ENCODE measurements at regions of chr3 and their contacts with region 1.

Region 1: DNA sequence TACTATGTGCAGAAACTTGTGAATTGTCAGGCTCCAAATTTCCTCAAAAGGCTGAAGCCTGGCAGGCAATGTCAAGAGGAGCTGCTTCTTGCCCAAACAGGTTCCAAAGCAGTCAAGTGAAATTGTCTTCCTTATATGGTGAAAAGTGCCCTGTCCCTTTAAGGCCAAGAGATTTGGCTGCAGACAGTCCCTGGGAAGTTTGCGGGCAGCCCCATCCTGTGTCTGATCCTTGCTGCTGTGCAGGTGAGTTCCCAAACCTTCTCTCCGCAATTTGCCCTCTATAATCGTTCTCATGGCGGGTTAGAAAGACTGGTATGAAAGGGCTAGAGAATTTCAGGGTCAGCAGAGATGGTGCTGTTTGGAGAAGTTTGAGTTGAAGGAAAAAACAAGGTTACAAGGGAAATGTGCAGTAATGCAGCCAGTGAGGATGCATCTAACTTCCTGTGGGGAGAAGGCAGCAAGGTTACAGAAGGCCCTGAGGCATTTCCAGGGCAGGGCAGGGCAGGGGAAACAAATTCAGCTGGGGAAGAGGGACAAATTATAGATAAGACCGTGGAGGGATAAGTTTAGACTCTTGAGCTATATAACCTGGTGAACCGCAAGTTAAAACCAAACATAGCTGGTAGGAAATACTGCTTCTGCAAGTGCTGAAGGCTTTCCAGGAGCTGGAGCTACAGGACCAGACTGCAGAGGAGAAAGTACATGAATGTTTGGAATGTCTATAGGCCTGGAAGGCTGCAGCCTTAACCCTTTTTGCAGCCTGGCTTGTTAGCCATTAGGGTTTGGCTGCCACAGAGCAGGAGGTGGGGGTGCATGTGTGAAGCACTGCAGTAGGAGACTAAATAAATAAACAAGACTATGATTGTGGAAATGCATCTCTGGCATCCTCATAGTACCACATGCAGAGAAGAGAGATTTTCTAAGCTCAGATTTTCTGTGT is 256.2 kb upstream of the IL12A start:
- DNase-seq: no peak
- H3K4me3 ChIP-seq: peak overlapping the region in 16 of 59 donors; percentile 2 to 33 (median 27)
- H3K27ac ChIP-seq: peak overlapping the region in 32 of 59 donors; percentile 1 to 70 (median 38)
- H3K27me3 ChIP-seq: no peaks in the 10 kb centered on the region
- CTCF ChIP-seq: no peak

Region 2: GRCh38 chr3:159654186-159655134 is 78.0 kb before region 1 on chr3:
- intact Hi-C with region 1: no loop called
- DNase-seq: no peak
- H3K4me3 ChIP-seq: no peak overlapping the region
- H3K27ac ChIP-seq: no peak overlapping the region
- H3K27me3 ChIP-seq: no peaks in the 10 kb centered on the region
- CTCF ChIP-seq: no peak

Region 3: GRCh38 chr3:159664653-159665052 is 67.8 kb before region 1 on chr3:
- intact Hi-C with region 1: no loop called
- DNase-seq: no peak
- H3K4me3 ChIP-seq: no peak overlapping the region
- H3K27ac ChIP-seq: no peak overlapping the region
- H3K27me3 ChIP-seq: no peaks in the 10 kb centered on the region
- CTCF ChIP-seq: no peak

Region 4: GRCh38 chr3:159721324-159721723 is 11.1 kb before region 1 on chr3:
- intact Hi-C with region 1: loop called in 1 of 2 experiments (anchors 2 kb)
- DNase-seq: no peak
- H3K4me3 ChIP-seq: no peak overlapping the region
- H3K27ac ChIP-seq: no peak overlapping the region
- H3K27me3 ChIP-seq: no peaks in the 10 kb centered on the region
- CTCF ChIP-seq: no peak

Region 5: DNA sequence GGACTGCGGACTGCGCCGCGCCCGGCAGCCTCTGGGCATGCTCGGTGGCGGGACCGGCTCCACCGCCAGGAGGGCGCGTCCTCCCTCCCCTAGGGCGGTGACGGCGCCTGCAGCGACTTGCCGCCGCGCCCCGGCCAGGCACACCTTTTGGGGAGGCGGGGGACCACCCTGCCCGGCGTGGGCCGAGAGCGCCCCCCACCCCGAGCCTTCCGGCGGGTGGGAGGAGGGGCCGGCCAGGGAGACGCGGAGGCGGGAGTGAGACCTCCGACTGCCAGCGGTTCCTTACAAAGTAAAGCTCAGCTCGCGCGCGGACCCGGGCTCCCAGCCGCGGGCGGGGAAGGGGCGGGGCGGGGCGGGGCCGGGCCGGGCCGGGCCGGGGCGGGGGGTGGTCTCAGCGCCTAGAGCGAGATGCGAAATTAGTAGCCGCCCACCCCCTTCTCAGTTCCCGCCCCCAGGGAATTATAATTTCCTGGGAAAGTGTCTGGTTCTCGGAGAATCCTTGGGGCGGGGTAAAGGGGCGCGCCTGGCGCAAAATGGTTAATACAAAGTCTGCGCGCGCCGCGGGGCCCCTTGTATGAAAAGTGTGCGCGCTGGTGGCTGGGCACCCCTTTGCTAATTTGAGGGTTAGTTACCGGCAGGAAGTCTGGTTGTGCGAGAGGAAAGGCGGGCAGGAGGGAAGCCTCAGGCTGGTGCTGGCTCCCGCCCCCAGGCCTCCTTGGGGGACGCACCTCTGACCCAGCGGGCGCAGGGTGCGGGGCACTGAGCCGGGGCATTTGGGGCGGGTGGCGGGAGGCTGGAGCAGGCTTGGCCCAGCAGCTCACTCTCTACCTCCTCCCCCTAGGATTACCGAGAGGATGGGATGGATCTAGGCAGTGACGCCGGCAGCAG is 31.4 kb after region 1 on chr3:
- intact Hi-C with region 1: no loop called
- DNase-seq: peak in 9 of 10 donors; percentile 50 to 84 (median 70)
- H3K4me3 ChIP-seq: peak overlapping the region; percentile 64 to 90 (median 81)
- H3K27ac ChIP-seq: peak overlapping the region; percentile 77 to 99 (median 94)
- H3K27me3 ChIP-seq: no peaks in the 10 kb centered on the region
- CTCF ChIP-seq: peak in 43 of 56 donors; percentile 9 to 55 (median 37)

Region 6: GRCh38 chr3:159804726-159805410 is 72.4 kb after region 1 on chr3:
- intact Hi-C with region 1: no loop called
- DNase-seq: peak in 9 of 10 donors; percentile 65 to 89 (median 81)
- H3K4me3 ChIP-seq: peak overlapping the region in 3 of 59 donors; percentile 5 to 10 (median 6)
- H3K27ac ChIP-seq: peak overlapping the region in 53 of 59 donors; percentile 6 to 98 (median 64)
- H3K27me3 ChIP-seq: no peaks in the 10 kb centered on the region
- CTCF ChIP-seq: peak; percentile 67 to 96 (median 90)

Measured in dorsolateral prefrontal cortex (tissue), 120 donors.